ENCODE measurements at regions of chr17 and their contacts with region 1.

Region 1: DNA sequence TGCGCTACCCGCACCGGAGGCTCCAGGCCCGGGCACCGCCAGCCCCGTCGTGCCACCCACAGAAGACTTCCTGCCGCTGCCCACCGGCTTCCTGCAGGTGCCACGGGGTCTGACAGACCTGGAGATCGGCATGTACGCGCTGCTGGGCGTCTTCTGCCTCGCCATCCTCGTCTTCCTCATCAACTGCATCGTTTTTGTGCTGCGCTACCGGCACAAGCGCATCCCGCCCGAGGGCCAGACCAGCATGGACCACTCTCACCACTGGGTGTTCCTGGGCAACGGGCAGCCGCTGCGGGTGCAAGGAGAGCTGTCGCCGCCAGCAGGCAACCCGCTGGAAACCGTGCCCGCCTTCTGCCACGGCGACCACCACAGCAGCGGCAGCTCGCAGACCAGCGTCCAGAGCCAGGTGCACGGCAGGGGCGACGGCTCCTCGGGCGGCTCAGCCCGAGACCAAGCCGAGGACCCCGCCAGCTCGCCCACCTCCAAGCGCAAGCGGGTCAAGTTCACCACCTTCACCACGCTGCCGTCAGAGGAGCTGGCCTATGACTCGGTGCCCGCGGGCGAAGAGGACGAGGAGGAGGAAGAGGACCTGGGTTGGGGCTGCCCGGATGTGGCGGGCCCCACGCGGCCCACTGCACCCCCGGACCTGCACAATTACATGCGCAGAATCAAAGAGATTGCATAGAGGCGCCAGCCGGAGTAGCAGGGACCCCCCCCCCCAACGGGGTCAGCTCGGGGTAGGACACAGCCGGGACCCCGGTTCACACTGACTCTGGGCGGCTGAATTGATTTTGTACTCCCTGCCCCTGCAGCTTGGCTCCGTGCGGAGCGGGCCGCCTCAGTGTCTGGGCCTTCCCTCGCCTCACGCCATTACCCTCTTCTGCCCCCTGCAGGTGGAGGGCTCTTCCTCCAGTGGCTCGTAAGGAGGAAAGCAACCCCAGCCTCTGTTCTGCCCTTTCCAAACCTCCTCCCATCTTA is 58.5 kb downstream of the TMEM132E start:
- DNase-seq: peak; percentile 93
- H3K4me3 Mint-ChIP-seq: peak overlapping the region; percentile 35
- H3K27ac Mint-ChIP-seq: no peak overlapping the region
- H3K4me1 Mint-ChIP-seq: no peaks in the 10 kb centered on the region
- H3K27me3 Mint-ChIP-seq: peaks cover 35% of the 10 kb centered on the region

Region 2: DNA sequence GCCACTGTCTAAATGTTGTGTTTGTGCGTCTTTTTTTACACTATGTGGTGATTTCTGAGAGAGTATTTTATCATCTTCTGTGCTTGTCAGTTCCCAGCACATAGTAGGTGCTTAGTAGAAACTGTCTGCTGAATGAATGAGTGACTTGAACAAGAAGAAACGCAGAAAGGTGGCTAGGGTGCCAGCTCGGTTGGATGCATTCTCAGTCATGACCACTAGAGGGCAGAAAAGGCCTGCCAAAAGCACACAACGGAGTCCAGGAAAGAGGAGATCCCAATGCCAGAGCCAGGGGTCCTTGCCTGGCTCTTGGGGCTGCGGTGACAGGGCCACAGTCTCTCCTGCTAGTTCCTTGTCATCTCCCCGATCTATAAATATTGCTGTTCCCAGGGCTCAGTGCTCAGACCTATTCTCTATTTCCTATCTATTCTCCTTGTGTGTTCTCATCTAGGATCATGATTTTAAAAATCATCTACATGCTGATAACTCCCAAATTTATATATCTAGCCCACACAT is 217.5 kb before region 1 on chr17:
- intact Hi-C with region 1: loop called (anchors 1 kb)
- DNase-seq: peak; percentile 90
- H3K4me3 Mint-ChIP-seq: no peak overlapping the region
- H3K27ac Mint-ChIP-seq: no peak overlapping the region
- H3K4me1 Mint-ChIP-seq: peaks cover 2% of the 10 kb centered on the region
- H3K27me3 Mint-ChIP-seq: peaks cover 43% of the 10 kb centered on the region

Region 3: DNA sequence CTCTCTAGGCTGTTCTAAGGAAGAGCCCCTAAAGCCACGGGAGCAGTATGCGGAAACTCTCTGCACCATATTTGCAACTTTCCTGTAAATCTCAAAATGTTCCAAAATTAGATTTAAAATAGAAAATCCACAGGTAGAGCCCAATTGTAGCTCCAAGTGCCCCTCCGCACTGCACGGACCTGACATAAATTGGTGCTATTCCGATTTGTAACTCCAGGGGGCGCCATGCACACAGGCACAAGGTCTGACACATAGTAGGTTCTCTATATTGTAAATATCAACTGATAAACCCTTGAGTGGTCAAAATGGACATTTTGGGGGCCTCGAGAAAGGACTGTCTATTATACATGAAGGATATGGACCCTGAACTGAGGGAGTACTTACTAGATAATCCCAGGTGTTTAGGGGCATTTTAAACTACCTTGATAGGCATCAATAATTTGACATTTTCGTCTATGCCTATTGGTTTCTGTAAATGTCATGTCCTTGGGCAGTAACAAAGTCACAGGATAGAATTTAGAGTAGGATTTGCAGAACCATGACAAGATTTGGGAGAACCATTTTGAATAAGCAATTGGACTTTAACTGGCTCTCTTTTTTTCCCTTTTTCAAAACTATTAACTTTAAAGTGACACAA is 95.0 kb before region 1 on chr17:
- intact Hi-C with region 1: loop called (anchors 1 kb)
- DNase-seq: peak; percentile 86
- H3K4me3 Mint-ChIP-seq: no peak overlapping the region
- H3K27ac Mint-ChIP-seq: no peak overlapping the region
- H3K4me1 Mint-ChIP-seq: no peaks in the 10 kb centered on the region
- H3K27me3 Mint-ChIP-seq: peaks cover 32% of the 10 kb centered on the region

Region 4: DNA sequence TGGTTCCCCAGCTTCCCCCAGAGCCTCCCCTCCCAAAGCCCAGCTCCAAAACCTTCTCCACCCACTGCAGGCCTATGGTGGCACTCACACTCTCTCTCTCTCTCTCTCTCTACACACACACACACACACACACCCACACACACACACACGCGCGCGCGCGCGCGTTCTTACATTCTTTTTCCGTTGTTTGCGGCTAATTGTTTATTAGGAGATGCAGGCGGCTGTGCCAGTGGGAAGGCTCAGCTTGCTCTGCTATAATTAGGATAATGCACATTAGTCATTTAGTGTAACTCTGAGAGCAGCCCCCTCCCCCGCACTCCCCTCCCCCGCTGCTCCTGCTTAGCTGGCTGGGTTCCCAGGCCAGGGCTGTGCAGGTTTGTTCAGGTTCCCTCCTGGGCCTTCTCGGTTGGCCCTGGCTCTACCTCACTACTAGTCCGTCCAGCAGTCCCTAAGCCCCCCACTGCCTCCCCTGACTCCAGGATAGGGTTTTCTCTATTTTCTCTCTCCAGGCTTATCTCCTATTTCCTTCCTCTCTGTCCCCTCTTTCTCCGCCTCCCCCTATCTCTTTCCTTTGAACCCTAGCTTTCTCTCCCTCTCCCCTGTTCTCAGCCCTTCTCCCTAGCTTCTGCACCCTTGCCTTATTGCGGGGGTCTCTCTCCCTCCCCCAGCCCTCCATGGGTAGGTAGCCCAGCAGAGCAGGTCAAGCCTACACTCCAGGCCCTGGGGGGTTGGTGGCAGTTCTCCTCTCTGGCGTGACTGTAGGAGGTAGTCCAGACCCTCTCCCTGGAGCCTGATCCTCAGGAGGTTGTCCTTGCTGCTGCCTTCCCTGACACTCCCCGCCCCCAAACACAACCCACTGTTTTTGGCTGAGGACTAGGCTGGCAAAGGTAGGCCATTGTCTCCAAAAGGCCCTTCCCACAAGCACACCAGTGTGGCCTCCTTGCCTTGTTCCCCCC is 24.5 kb before region 1 on chr17:
- intact Hi-C with region 1: no loop called
- DNase-seq: no peak
- H3K4me3 Mint-ChIP-seq: no peak overlapping the region
- H3K27ac Mint-ChIP-seq: no peak overlapping the region
- H3K4me1 Mint-ChIP-seq: no peaks in the 10 kb centered on the region
- H3K27me3 Mint-ChIP-seq: peaks cover 37% of the 10 kb centered on the region

Region 5: GRCh38 chr17:34709151-34709754 is 71.4 kb after region 1 on chr17:
- intact Hi-C with region 1: no loop called
- DNase-seq: no peak
- H3K4me3 Mint-ChIP-seq: no peak overlapping the region
- H3K27ac Mint-ChIP-seq: no peak overlapping the region
- H3K4me1 Mint-ChIP-seq: no peaks in the 10 kb centered on the region
- H3K27me3 Mint-ChIP-seq: no peaks in the 10 kb centered on the region

Measured in activated CD4-positive, alpha-beta T cell treated with anti-CD3 and anti-CD28 coated beads, Interleukin-2, amount 10 ng/mL, durations not matched to agents 24 days and 14 days (primary cell).